ENCODE measurements at regions of chr1 and their contacts with region 1.

Region 1: GRCh38 chr1:153494976-153495535 is 34.6 kb upstream of the S100A7 start:
- DNase-seq: peak; percentile 73 to 89 (median 76)
- ATAC-seq: peak; percentile 49 to 72 (median 66)
- H3K4me3 ChIP-seq: no peak overlapping the region
- H3K27ac ChIP-seq: no peak overlapping the region
- H3K4me1 ChIP-seq: peaks cover 0 to 38% (median 8%) of the 10 kb centered on the region in 12 donors
- H3K27me3 ChIP-seq: no peaks in the 10 kb centered on the region
- CTCF ChIP-seq: peak; percentile 87 to 97 (median 92)
- POLR2A ChIP-seq: no peak

Region 2: GRCh38 chr1:151720974-151721787 is 1773.9 kb before region 1 on chr1 and contains the start of gene RIIAD1:
- intact Hi-C with region 1: no loop called
- DNase-seq: peak; percentile 20 to 74 (median 45)
- ATAC-seq: peak; percentile 50 to 88 (median 84)
- H3K4me3 ChIP-seq: peak within 1 kb of the TSS; percentile 27 to 74 (median 58)
- H3K27ac ChIP-seq: peak within 1 kb of the TSS; percentile 55 to 89 (median 74)
- H3K4me1 ChIP-seq: peaks cover 0 to 53% (median 33%) of the 10 kb centered on the region in 12 donors
- H3K27me3 ChIP-seq: peaks cover 0 to 37% (median 4%) of the 10 kb centered on the region in 9 donors
- CTCF ChIP-seq: peak in 2 of 12 donors; percentile 32 to 37
- POLR2A ChIP-seq: no peak
- total RNA-seq, gene RIIAD1: 2.3 to 20.8 (median 6.0) TPM in 8 of 9 donors, not detected in the other

Region 3: GRCh38 chr1:153040950-153041631 is 454.0 kb before region 1 on chr1 and contains the start of gene SPRR2D:
- intact Hi-C with region 1: no loop called
- DNase-seq: no peak
- ATAC-seq: no peak
- H3K4me3 ChIP-seq: no peak within 1 kb of the TSS
- H3K27ac ChIP-seq: no peak within 1 kb of the TSS
- H3K4me1 ChIP-seq: no peaks in the 10 kb centered on the region
- H3K27me3 ChIP-seq: no peaks in the 10 kb centered on the region
- CTCF ChIP-seq: no peak
- POLR2A ChIP-seq: no peak
- total RNA-seq, gene SPRR2D: not detected

Region 4: GRCh38 chr1:153261281-153262069 is 233.6 kb before region 1 on chr1:
- intact Hi-C with region 1: no loop called
- DNase-seq: peak in 4 of 5 donors; percentile 26 to 72 (median 34)
- ATAC-seq: peak in 2 of 4 donors; percentile 68 to 78
- H3K4me3 ChIP-seq: peak overlapping the region; percentile 32 to 58 (median 46)
- H3K27ac ChIP-seq: no peak overlapping the region
- H3K4me1 ChIP-seq: peaks cover 0 to 24% (median 6%) of the 10 kb centered on the region in 12 donors
- H3K27me3 ChIP-seq: peaks cover 9 to 70% (median 33%) of the 10 kb centered on the region in 9 donors
- CTCF ChIP-seq: no peak
- POLR2A ChIP-seq: no peak

Region 5: GRCh38 chr1:153352523-153352922 is 142.5 kb before region 1 on chr1:
- intact Hi-C with region 1: loop called (anchors 1 to 2 kb)
- DNase-seq: peak; percentile 52 to 73 (median 63)
- ATAC-seq: peak; percentile 63 to 88 (median 78)
- H3K4me3 ChIP-seq: no peak overlapping the region
- H3K27ac ChIP-seq: no peak overlapping the region
- H3K4me1 ChIP-seq: peaks cover 0 to 13% (median 0%) of the 10 kb centered on the region in 12 donors
- H3K27me3 ChIP-seq: peaks cover 0 to 38% (median 14%) of the 10 kb centered on the region in 9 donors
- CTCF ChIP-seq: peak; percentile 82 to 96 (median 92)
- POLR2A ChIP-seq: no peak

Region 6: DNA sequence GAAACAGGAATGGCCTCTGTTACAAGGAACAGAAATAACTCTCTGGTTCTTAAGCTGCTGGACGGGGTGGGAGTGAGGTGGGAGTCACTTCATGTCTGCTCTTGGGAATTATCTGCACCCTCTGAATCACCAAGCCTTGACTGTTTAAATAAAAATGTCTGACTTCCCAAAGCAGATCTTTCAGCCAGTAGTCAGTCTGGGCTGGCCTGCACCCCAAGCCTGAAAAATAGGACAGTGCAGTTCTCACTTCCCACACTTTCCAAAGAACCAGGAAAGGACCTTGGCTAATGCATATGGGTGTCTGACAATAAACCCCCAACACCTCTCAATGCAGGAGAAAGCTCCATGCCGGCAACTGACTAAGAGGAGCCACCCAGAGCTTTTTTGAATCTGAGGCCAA is 35.4 kb before region 1 on chr1:
- intact Hi-C with region 1: loop called in 2 of 10 experiments (anchors 5 kb)
- DNase-seq: no peak
- ATAC-seq: no peak
- H3K4me3 ChIP-seq: no peak overlapping the region
- H3K27ac ChIP-seq: no peak overlapping the region
- H3K4me1 ChIP-seq: no peaks in the 10 kb centered on the region
- H3K27me3 ChIP-seq: no peaks in the 10 kb centered on the region
- CTCF ChIP-seq: no peak
- POLR2A ChIP-seq: no peak

Region 7: DNA sequence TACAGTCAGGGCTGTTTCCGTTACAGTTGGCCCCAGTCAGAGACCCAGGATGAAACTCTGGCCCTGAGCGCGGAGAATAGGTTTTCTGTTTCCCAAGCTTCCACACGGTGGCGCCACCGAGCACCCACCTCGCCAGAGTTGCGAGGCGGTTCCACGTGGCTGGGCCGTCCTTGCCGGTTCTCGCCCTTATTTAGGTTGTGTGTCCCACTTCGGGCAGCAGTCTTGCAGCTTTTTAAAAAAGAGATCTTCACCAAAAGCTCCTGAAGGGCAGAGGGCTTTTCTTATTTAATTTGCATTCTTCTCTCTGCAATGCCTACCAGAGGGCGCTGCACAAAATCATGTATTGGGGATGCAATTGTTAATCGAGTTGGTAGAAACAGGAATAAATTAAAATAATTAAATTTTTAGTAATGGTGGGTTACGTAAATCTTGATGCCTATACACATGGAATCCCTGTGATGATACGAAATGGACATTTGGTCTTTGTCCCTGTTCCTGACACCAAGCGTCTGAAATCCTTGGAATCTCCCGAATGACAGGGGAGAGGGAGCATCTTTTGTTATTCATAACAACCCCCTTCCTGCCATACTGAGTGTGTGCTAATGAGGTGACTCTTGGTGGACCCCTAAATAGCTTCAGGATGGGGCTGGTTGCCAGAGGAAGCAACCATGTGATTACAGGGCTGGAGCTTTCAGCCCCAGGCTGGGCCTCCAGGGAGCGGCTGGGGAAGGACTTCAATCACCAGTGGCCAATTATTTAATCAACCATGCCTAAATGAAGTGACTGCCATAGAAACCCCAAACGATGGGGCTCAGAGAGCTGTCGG is 29.0 kb before region 1 on chr1:
- intact Hi-C with region 1: loop called in 3 of 10 experiments (anchors 2 to 5 kb)
- DNase-seq: peak; percentile 39 to 77 (median 56)
- ATAC-seq: peak; percentile 37 to 81 (median 60)
- H3K4me3 ChIP-seq: no peak overlapping the region
- H3K27ac ChIP-seq: peak overlapping the region in 1 of 12 donors; percentile 14
- H3K4me1 ChIP-seq: peaks cover 0 to 24% (median 12%) of the 10 kb centered on the region in 12 donors
- H3K27me3 ChIP-seq: no peaks in the 10 kb centered on the region
- CTCF ChIP-seq: peak; percentile 67 to 84 (median 76)
- POLR2A ChIP-seq: no peak